ENCODE measurements at regions of chr4 and their contacts with region 1.

Region 1: DNA sequence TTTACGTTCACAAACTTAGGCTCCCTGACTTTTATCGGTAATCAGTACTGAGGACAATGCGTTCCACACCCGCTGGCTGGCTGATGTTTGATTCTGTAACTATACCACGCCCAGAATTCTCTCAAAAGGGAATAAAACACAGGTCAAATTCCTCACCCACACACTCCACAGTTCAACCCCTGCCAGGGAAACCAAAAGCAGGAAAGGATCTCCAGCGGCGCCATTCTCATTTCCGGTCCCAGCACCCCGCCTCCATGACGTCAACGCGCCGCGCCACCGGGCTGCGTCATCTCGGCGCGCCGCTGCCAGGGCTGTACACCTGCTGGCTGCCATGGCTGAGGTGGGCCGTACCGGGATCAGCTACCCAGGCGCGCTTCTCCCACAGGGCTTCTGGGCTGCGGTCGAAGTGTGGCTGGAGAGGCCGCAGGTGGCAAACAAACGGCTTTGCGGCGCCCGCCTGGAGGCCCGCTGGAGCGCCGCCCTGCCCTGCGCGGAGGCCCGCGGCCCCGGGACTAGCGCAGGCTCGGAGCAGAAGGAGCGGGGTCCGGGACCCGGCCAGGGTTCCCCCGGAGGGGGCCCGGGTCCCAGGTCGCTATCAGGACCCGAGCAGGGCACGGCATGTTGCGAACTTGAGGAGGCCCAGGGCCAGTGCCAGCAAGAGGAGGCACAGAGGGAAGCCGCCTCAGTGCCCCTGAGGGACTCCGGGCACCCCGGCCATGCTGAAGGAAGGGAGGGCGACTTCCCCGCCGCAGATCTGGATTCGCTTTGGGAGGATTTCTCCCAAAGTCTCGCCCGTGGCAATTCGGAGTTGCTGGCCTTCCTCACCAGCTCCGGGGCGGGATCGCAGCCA is at the starts of genes ACOX3 and TRMT44:
- DNase-seq: peak; percentile 100
- ATAC-seq: peak; percentile 87
- H3K4me3 Mint-ChIP-seq: peak within 1 kb of the TSS; percentile 97
- H3K27ac Mint-ChIP-seq: peak within 1 kb of the TSS; percentile 98
- H3K4me1 Mint-ChIP-seq: peaks cover 46% of the 10 kb centered on the region
- H3K27me3 Mint-ChIP-seq: no peaks in the 10 kb centered on the region
- total RNA-seq, gene ACOX3: 15.2 to 16.6 TPM
- total RNA-seq, gene TRMT44: 26.1 to 27.9 TPM

Region 2: GRCh38 chr4:8428293-8429097 is 12.2 kb before region 1 on chr4:
- POLR2A ChIA-PET with region 1: interaction called, 27 read pairs
- DNase-seq: peak; percentile 98
- ATAC-seq: peak; percentile 95
- H3K4me3 Mint-ChIP-seq: peak overlapping the region; percentile 95
- H3K27ac Mint-ChIP-seq: peak overlapping the region; percentile 91
- H3K4me1 Mint-ChIP-seq: peaks cover 12% of the 10 kb centered on the region
- H3K27me3 Mint-ChIP-seq: no peaks in the 10 kb centered on the region

Region 3: GRCh38 chr4:8488791-8489369 is 48.2 kb after region 1 on chr4:
- POLR2A ChIA-PET with region 1: no interaction called
- DNase-seq: no peak
- ATAC-seq: no peak
- H3K4me3 Mint-ChIP-seq: no peak overlapping the region
- H3K27ac Mint-ChIP-seq: no peak overlapping the region
- H3K4me1 Mint-ChIP-seq: no peaks in the 10 kb centered on the region
- H3K27me3 Mint-ChIP-seq: no peaks in the 10 kb centered on the region

Measured in activated naive CD8-positive, alpha-beta T cell treated with anti-CD3 and anti-CD28 coated beads, Interleukin-2, amount 10 ng/mL, durations not matched to agents 7 days and 5 days (primary cell).